Adrenal gland (tissue), 19 donors: ENCODE measurements at regions of chr4 and their contacts with region 1.

Region 1: GRCh38 chr4:150217192-150217591 is 138.9 kb downstream of the DCLK2 start:
- DNase-seq: no peak
- H3K4me3 ChIP-seq: no peak overlapping the region
- H3K27ac ChIP-seq: no peak overlapping the region
- H3K4me1 ChIP-seq: no peaks in the 10 kb centered on the region
- H3K27me3 ChIP-seq: no peaks in the 10 kb centered on the region
- CTCF ChIP-seq: peak in 5 of 6 experiments; percentile 20 to 43 (median 39)
- POLR2A ChIP-seq: no peak

Region 2: DNA sequence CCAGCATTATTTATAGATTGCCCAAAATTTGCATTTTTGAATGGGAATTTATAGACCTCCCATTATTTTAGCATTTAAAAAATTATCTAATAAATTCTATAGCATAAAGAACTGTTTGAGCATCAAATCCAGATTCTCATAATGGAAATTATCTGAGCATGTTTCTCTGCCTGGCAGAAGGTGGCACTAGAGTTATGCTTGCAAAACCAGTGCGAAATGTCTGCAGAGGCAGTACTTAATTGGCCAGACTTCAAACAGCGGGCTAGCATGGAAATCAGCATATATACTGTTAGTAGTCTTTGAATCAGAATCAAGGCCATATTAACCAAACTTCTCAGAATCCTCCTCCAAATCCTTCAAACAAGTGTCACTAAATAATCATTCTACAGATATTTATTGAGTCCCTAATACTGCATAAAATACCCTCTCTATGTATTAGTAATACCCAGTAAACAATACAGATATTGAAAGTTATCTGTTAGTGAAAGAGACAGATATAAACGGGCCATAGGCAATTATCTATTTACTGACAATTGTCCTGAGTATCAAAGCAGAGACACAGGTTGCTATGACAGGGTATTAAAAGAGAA is 217.6 kb before region 1 on chr4:
- intact Hi-C with region 1: loop called in 1 of 2 experiments (anchors 10 kb)
- DNase-seq: peak in 6 of 7 donors; percentile 43 to 61 (median 46)
- H3K4me3 ChIP-seq: no peak overlapping the region
- H3K27ac ChIP-seq: no peak overlapping the region
- H3K4me1 ChIP-seq: peaks cover 0 to 3% of the 10 kb centered on the region in 2 donors
- H3K27me3 ChIP-seq: no peaks in the 10 kb centered on the region
- CTCF ChIP-seq: peak; percentile 42 to 82 (median 70)
- POLR2A ChIP-seq: no peak

Region 3: DNA sequence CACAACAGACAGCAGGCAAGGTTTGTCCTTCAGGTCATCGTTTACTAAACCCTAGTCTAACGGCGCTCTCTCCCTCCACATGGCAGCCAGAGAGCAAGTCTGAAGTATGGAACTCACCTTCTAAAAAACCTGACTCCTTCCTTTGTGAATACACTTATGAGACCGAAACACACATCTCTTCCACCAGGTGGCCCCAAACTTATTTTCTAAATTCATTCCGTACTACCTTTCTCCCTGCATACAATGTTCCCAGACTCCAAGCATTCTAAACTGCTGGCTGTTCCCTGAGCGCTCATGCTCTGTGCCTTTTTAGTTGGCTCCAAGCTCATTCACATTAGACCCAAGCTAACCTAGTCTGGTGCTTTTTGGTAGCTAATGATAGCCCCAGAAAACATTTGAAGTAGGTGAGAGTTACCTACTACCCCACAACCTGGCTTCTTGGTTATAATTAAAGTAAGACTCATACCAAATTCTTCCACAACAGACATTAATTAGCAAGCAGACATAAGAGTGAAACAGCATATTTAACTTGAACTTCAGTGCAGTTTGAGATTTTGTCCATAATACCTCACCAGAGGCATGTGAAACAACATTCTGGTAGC is 206.6 kb before region 1 on chr4:
- intact Hi-C with region 1: loop called (anchors 10 kb)
- DNase-seq: peak; percentile 27 to 80 (median 47)
- H3K4me3 ChIP-seq: no peak overlapping the region
- H3K27ac ChIP-seq: no peak overlapping the region
- H3K4me1 ChIP-seq: peaks cover 0 to 4% of the 10 kb centered on the region in 2 donors
- H3K27me3 ChIP-seq: no peaks in the 10 kb centered on the region
- CTCF ChIP-seq: peak; percentile 24 to 72 (median 61)
- POLR2A ChIP-seq: no peak

Region 4: GRCh38 chr4:150078637-150079581 is 138.3 kb before region 1 on chr4:
- intact Hi-C with region 1: loop called in 1 of 2 experiments (anchors 5 kb)
- DNase-seq: peak; percentile 63 to 78 (median 69)
- H3K4me3 ChIP-seq: peak overlapping the region in 3 of 4 donors; percentile 4 to 65 (median 52)
- H3K27ac ChIP-seq: peak overlapping the region in 4 of 5 donors; percentile 56 to 93 (median 80)
- H3K4me1 ChIP-seq: peaks cover 9 to 17% of the 10 kb centered on the region in 2 donors
- H3K27me3 ChIP-seq: no peaks in the 10 kb centered on the region
- CTCF ChIP-seq: peak in 1 of 6 experiments; percentile 4
- POLR2A ChIP-seq: peak in 1 of 2 donors; percentile 27

Region 5: DNA sequence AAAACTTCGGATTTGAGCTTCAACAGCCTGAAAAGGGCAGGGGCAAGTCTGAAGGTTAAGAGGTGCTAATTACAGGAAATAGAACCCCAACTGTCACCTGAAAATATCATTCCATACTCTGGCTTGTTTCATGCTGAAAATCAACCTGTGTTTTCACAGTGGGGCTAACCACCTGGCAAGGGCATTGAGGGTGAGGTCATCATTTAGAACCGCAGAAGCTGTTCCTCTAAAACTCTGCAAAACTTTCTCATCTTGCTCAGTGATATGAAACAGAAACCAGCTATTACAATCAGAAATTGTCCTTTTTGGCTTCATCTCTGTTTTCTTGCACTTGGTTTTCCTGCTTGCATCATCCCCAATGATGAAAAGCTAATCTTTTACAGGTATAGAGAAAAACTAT is 108.7 kb after region 1 on chr4:
- intact Hi-C with region 1: no loop called
- DNase-seq: no peak
- H3K4me3 ChIP-seq: no peak overlapping the region
- H3K27ac ChIP-seq: no peak overlapping the region
- H3K4me1 ChIP-seq: no peaks in the 10 kb centered on the region
- H3K27me3 ChIP-seq: no peaks in the 10 kb centered on the region
- CTCF ChIP-seq: no peak
- POLR2A ChIP-seq: no peak